ENCODE measurements at regions of chr4 and their contacts with region 1.

Region 1: DNA sequence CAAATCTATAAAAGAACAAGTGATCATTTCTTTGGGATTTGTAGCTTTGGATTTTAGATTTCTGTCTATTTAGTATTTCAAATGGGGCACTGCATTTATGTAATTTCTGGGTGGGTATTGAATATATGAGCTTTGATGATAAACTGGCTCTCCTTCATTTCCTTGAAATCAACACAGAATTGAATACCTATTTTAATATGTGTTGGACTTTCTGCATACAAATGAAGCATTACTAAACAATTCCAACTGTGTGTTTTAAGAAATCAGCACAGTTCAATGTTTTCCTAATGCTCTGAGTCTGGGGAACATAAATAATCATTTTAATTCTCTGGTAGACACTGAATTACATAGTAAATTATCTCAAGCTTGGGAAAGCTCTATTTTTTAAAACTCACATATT is 42.0 kb upstream of the GBA3 start:
- H3K4me3 ChIP-seq: no peak overlapping the region
- H3K27ac ChIP-seq: no peak overlapping the region
- H3K4me1 ChIP-seq: no peaks in the 10 kb centered on the region
- CTCF ChIP-seq: no peak

Region 2: DNA sequence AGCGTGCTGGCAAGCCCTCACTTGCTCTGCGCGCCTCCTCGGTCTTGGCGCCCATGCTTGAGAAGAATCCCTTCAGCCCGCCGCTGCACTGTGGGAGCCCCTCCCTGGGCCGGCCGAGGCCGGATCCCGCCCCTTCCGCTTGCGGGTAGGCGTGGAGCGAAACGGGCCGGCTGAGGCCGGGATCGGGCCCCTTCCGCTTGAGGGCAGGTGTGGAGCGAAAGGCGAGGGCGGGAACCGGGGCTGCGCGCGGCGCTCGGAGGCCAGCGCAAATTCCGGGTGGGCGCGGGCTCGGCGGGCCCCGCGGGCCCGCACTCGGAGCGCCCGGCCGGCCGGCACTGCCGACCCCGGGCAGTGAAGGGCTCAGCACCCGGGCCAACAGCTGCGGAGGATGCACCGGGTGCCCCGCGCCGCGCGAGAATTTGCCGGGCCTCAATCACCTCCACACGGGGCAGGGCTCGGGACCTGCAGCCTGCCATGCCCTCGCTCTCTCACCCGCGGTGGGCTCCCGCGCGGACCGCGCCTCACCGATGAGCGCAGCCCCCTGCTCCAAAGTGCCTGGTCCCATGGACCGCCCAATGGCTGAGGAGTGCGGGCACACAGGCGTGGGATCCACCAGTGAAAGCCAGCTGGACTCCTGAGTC is 16.1 kb before region 1 on chr4:
- CTCF ChIA-PET with region 1: no interaction called
- POLR2A ChIA-PET with region 1: interaction called, 13 read pairs
- H3K4me3 ChIP-seq: no peak overlapping the region
- H3K27ac ChIP-seq: no peak overlapping the region
- H3K4me1 ChIP-seq: no peaks in the 10 kb centered on the region
- CTCF ChIP-seq: no peak

Region 3: DNA sequence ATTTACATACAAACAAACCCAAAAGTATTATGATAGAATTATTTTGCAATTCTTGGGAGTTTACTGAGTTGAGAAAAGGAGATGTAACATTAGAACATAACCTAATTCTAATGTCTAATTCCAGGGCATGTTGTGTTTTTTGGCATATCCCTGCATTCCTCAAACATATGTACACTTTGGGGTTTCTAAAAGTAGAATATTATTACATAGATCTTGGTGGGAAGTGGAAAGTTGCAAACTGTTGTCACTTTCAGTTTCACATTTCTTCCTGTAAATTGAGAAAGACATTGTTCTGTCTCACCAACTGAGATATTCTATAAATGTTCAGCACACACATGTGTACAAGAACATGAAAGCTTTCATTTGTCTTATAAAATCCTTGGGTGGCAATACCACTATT is 17.5 kb after region 1 on chr4:
- CTCF ChIA-PET with region 1: no interaction called
- POLR2A ChIA-PET with region 1: no interaction called
- H3K4me3 ChIP-seq: no peak overlapping the region
- H3K27ac ChIP-seq: no peak overlapping the region
- H3K4me1 ChIP-seq: no peaks in the 10 kb centered on the region
- CTCF ChIP-seq: no peak

Region 4: GRCh38 chr4:22688236-22688635 is 37.5 kb after region 1 on chr4:
- CTCF ChIA-PET with region 1: no interaction called
- POLR2A ChIA-PET with region 1: no interaction called
- H3K4me3 ChIP-seq: no peak overlapping the region
- H3K27ac ChIP-seq: no peak overlapping the region
- H3K4me1 ChIP-seq: no peaks in the 10 kb centered on the region
- CTCF ChIP-seq: no peak

Region 5: GRCh38 chr4:22744478-22745062 is 93.8 kb after region 1 on chr4:
- CTCF ChIA-PET with region 1: no interaction called
- POLR2A ChIA-PET with region 1: no interaction called
- H3K4me3 ChIP-seq: no peak overlapping the region
- H3K27ac ChIP-seq: no peak overlapping the region
- H3K4me1 ChIP-seq: no peaks in the 10 kb centered on the region
- CTCF ChIP-seq: no peak

Region 6: DNA sequence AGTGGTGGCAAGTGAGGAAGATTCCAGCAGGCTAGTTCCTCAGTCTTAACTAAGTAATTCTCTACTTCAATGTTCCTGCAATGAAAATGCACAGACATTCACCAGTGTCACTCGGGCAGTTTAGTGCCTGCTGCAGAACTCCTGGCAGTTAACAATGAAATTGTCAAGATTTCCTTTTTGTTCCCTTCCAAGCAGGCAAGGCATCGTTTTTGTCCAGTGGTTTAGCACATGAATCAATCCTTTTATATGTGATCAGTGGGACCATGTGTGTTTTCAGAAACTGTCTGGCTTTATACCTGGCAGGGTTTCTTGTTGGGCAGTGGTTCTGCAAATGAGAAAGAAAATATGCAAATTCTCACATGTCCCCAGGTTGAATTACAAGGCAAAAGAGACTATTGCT is 164.1 kb after region 1 on chr4:
- CTCF ChIA-PET with region 1: no interaction called
- POLR2A ChIA-PET with region 1: no interaction called
- H3K4me3 ChIP-seq: no peak overlapping the region
- H3K27ac ChIP-seq: no peak overlapping the region
- H3K4me1 ChIP-seq: no peaks in the 10 kb centered on the region
- CTCF ChIP-seq: no peak